ENCODE measurements at regions of chr3 and their contacts with region 1.

Region 1: GRCh38 chr3:170162630-170163029 is 18.9 kb downstream of the PHC3 start:
- DNase-seq: no peak
- ATAC-seq: no peak
- H3K4me3 ChIP-seq: no peak overlapping the region
- H3K4me3 Mint-ChIP-seq: peak overlapping the region in 1 of 3 donors; percentile 5
- H3K27ac ChIP-seq: no peak overlapping the region
- H3K27ac Mint-ChIP-seq: peak overlapping the region; percentile 1 to 72
- H3K4me1 ChIP-seq: peaks cover 3 to 27% of the 10 kb centered on the region in 2 experiments
- H3K4me1 Mint-ChIP-seq: peaks cover 66 to 76% (median 73%) of the 10 kb centered on the region in 3 donors
- H3K27me3 ChIP-seq: no peaks in the 10 kb centered on the region
- H3K27me3 Mint-ChIP-seq: no peaks in the 10 kb centered on the region

Region 2: DNA sequence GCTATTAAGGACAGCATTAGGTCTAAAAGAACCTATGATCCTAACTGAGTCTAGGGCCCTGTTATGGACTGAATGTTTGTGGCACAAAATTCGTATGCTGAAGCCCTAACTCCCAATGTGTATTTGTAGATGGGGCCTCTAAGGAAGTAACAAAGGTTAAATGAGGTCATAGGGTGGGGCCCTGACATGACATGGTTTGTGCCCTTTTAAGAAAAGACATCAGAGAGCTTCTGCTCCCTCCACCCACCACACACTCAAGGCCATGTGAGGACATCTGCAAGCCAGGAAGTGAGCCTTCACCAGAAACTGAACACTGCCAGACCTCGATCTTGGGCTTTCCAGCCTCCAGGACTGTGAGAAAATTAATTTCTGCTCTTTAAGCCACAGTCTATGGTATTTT is 30.3 kb before region 1 on chr3:
- CTCF ChIA-PET with region 1: no interaction called
- POLR2A ChIA-PET with region 1: no interaction called
- DNase-seq: peak in 1 of 35 experiments; percentile 11
- ATAC-seq: no peak
- H3K4me3 ChIP-seq: no peak overlapping the region
- H3K4me3 Mint-ChIP-seq: no peak overlapping the region
- H3K27ac ChIP-seq: no peak overlapping the region
- H3K27ac Mint-ChIP-seq: no peak overlapping the region
- H3K4me1 ChIP-seq: peaks cover 2 to 12% of the 10 kb centered on the region in 2 experiments
- H3K4me1 Mint-ChIP-seq: peaks cover 32 to 62% (median 49%) of the 10 kb centered on the region in 3 donors
- H3K27me3 ChIP-seq: no peaks in the 10 kb centered on the region
- H3K27me3 Mint-ChIP-seq: no peaks in the 10 kb centered on the region

Region 3: DNA sequence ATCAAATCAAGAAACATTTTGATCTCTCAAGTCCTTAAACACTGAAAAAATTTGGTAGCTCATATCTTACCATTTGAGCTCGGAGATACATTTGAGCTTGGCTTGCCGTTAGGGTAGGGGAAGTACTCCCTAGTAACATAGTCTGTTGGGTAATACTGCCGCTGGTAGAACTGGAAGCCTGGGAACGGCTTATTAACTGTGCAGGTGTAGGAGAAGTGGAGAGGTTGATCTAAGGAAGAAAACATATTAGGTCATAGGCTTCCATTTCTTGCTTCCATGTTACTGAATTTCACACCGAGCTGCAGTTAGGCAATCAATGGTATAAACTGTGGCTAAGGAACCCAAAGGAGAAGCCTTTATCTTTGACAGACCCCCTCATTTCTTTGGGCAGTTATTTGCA is 13.6 kb before region 1 on chr3:
- CTCF ChIA-PET with region 1: no interaction called
- POLR2A ChIA-PET with region 1: no interaction called
- DNase-seq: no peak
- ATAC-seq: no peak
- H3K4me3 ChIP-seq: no peak overlapping the region
- H3K4me3 Mint-ChIP-seq: no peak overlapping the region
- H3K27ac ChIP-seq: no peak overlapping the region
- H3K27ac Mint-ChIP-seq: no peak overlapping the region
- H3K4me1 ChIP-seq: peaks cover 12% of the 10 kb centered on the region in 2 experiments
- H3K4me1 Mint-ChIP-seq: peaks cover 34 to 51% (median 50%) of the 10 kb centered on the region in 3 donors
- H3K27me3 ChIP-seq: no peaks in the 10 kb centered on the region
- H3K27me3 Mint-ChIP-seq: no peaks in the 10 kb centered on the region

Region 4: DNA sequence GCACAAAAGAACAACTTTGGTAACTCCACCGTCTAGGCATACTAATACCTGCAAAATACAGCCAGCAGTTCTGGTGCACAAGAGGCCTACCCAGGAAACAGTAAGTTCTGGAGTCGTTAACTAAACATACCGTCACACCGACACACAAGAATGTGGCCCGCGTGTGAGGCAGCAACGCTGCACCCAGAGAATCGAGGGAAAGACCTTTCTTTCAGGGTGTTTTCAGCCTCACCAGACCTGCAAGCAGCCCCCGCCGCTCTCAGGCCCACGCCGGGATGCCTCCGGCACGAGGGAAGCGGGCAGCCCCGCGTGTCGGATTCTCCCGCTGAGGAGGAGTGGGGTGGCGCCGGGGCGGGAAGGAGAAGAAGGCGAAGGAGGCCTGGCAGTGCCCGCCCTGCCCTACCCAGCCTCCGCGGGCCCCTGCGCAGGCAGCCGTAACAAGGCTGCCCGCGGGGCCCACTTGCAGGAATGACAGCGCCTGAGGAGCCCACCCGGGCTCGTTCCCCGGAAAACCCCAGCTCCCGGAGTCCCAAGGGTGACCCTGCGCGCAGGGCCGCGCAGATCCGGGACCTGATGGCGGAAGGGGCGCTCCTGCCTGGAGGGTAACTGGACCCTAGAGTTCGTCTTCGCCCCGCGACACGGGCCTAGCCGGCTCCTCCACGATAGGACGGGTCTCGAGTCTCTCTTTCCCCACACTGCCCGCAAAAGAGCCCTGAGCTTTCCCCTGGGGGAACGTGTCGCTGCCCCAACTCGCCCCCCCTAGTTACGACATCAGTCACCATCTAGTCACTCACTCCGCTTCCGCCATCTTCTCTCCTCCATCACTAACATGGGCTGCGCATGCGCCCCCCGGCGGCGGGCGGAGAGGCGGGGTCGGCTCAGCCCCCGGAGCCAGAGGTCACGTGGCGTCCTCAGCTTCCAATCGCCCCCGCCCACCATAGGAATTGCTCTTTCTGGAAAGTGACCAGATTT is 18.6 kb after region 1 on chr3 and contains the start of gene PHC3:
- CTCF ChIA-PET with region 1: interaction called in 1 of 2 experiments, 3 read pairs
- POLR2A ChIA-PET with region 1: interaction called in 1 of 2 experiments, 16 read pairs
- DNase-seq: peak; percentile 82 to 96 (median 87)
- ATAC-seq: peak; percentile 76 to 81 (median 79)
- H3K4me3 ChIP-seq: peak within 1 kb of the TSS; percentile 97 to 98
- H3K4me3 Mint-ChIP-seq: peak within 1 kb of the TSS; percentile 94 to 99 (median 97)
- H3K27ac ChIP-seq: peak within 1 kb of the TSS; percentile 100
- H3K27ac Mint-ChIP-seq: peak within 1 kb of the TSS; percentile 99 to 100
- H3K4me1 ChIP-seq: peaks cover 24 to 32% of the 10 kb centered on the region in 2 experiments
- H3K4me1 Mint-ChIP-seq: peaks cover 33 to 44% (median 34%) of the 10 kb centered on the region in 3 donors
- H3K27me3 ChIP-seq: no peaks in the 10 kb centered on the region
- H3K27me3 Mint-ChIP-seq: no peaks in the 10 kb centered on the region
- total RNA-seq, gene PHC3: 132 to 173 (median 150) TPM

Measured in T-cell (primary cell).